CD14-positive monocyte (primary cell): ENCODE measurements at regions of chr7 and their contacts with region 1.

Region 1: GRCh38 chr7:80027611-80028173 is 106.9 kb upstream of the GNAI1 start:
- DNase-seq: no peak
- H3K4me3 ChIP-seq: no peak overlapping the region
- H3K4me3 Mint-ChIP-seq: no peak overlapping the region
- H3K27ac ChIP-seq: no peak overlapping the region
- H3K27ac Mint-ChIP-seq: no peak overlapping the region
- H3K4me1 ChIP-seq: no peaks in the 10 kb centered on the region
- H3K4me1 Mint-ChIP-seq: no peaks in the 10 kb centered on the region
- H3K27me3 ChIP-seq: no peaks in the 10 kb centered on the region
- H3K27me3 Mint-ChIP-seq: peaks cover 0 to 3% (median 0%) of the 10 kb centered on the region in 3 donors
- CTCF ChIP-seq: no peak

Region 2: DNA sequence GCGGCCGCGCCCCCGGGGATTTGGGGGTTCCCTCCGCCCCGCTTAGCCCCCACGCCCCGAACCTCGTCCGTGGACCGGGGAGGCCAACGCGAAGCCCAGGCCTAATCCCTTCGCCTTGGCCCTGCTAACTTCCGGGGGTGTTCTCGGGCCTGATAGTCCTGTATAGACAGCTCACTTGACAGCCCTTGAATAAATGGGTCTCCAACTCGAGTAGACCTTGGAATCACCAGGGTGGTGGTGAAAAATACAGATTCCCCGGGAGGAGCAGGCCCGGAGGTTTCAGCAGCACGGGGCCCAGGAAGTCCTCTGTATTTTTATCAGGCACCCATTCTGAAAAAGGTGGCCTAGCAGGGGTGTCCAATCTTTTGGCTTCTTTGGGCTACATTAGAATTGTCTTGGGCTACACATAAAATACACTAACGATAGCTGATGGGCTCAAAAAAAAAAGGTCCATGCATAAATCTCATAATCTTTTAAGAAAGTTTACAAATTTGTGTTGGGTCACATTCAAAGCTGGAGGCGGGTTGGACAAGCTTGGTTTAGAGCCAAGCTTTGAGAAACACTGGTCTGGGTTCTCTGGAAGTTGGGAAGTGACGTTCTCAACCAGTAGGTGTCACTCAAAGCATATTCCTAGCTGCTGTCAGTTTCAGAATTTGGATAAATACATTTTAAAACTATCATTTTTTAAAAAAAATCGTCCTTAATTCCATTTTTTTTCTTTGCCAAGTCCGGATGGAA is 2007.4 kb before region 1 on chr7:
- intact Hi-C with region 1: loop called in 1 of 2 experiments (anchors 10 kb)
- DNase-seq: peak; percentile 23 to 55 (median 40)
- H3K4me3 ChIP-seq: peak overlapping the region; percentile 61 to 78 (median 66)
- H3K4me3 Mint-ChIP-seq: peak overlapping the region; percentile 76 to 88
- H3K27ac ChIP-seq: no peak overlapping the region
- H3K27ac Mint-ChIP-seq: peak overlapping the region in 1 of 7 donors; percentile 73
- H3K4me1 ChIP-seq: peaks cover 11 to 17% of the 10 kb centered on the region in 2 donors
- H3K4me1 Mint-ChIP-seq: peaks cover 18% of the 10 kb centered on the region
- H3K27me3 ChIP-seq: peaks cover 25 to 28% of the 10 kb centered on the region in 2 donors
- H3K27me3 Mint-ChIP-seq: peaks cover 18 to 22% (median 21%) of the 10 kb centered on the region in 3 donors
- CTCF ChIP-seq: peak; percentile 84

Region 3: GRCh38 chr7:80014511-80014910 is 13.2 kb before region 1 on chr7:
- intact Hi-C with region 1: no loop called
- DNase-seq: no peak
- H3K4me3 ChIP-seq: no peak overlapping the region
- H3K4me3 Mint-ChIP-seq: no peak overlapping the region
- H3K27ac ChIP-seq: no peak overlapping the region
- H3K27ac Mint-ChIP-seq: no peak overlapping the region
- H3K4me1 ChIP-seq: peaks cover 0 to 2% of the 10 kb centered on the region in 2 donors
- H3K4me1 Mint-ChIP-seq: no peaks in the 10 kb centered on the region
- H3K27me3 ChIP-seq: no peaks in the 10 kb centered on the region
- H3K27me3 Mint-ChIP-seq: peaks cover 0 to 2% (median 1%) of the 10 kb centered on the region in 3 donors
- CTCF ChIP-seq: no peak

Region 4: GRCh38 chr7:80175744-80176143 is 148.1 kb after region 1 on chr7:
- intact Hi-C with region 1: no loop called
- DNase-seq: no peak
- H3K4me3 ChIP-seq: no peak overlapping the region
- H3K4me3 Mint-ChIP-seq: no peak overlapping the region
- H3K27ac ChIP-seq: no peak overlapping the region
- H3K27ac Mint-ChIP-seq: no peak overlapping the region
- H3K4me1 ChIP-seq: no peaks in the 10 kb centered on the region
- H3K4me1 Mint-ChIP-seq: no peaks in the 10 kb centered on the region
- H3K27me3 ChIP-seq: no peaks in the 10 kb centered on the region
- H3K27me3 Mint-ChIP-seq: no peaks in the 10 kb centered on the region
- CTCF ChIP-seq: no peak

Region 5: GRCh38 chr7:81267508-81267907 is 1239.8 kb after region 1 on chr7:
- intact Hi-C with region 1: no loop called
- DNase-seq: no peak
- H3K4me3 ChIP-seq: no peak overlapping the region
- H3K4me3 Mint-ChIP-seq: no peak overlapping the region
- H3K27ac ChIP-seq: no peak overlapping the region
- H3K27ac Mint-ChIP-seq: no peak overlapping the region
- H3K4me1 ChIP-seq: no peaks in the 10 kb centered on the region
- H3K4me1 Mint-ChIP-seq: no peaks in the 10 kb centered on the region
- H3K27me3 ChIP-seq: no peaks in the 10 kb centered on the region
- H3K27me3 Mint-ChIP-seq: peaks cover 0 to 2% (median 0%) of the 10 kb centered on the region in 3 donors
- CTCF ChIP-seq: no peak